ENCODE measurements at regions of chr21 and their contacts with region 1.

Region 1: GRCh38 chr21:38355992-38356797 is 99.4 kb downstream of the KCNJ15 start:
- DNase-seq: peak; percentile 70
- H3K4me3 ChIP-seq: no peak overlapping the region
- H3K27ac ChIP-seq: no peak overlapping the region
- H3K4me1 ChIP-seq: peaks cover 14% of the 10 kb centered on the region
- H3K27me3 ChIP-seq: peaks cover 0 to 2% of the 10 kb centered on the region in 2 experiments
- CTCF ChIP-seq: peak; percentile 95 to 97
- POLR2A ChIP-seq: no peak

Region 2: GRCh38 chr21:37700641-37701202 is 655.5 kb before region 1 on chr21:
- CTCF ChIA-PET with region 1: interaction called, 22 read pairs
- POLR2A ChIA-PET with region 1: no interaction called
- dilution Hi-C with region 1: no loop called
- intact Hi-C with region 1: loop called (anchors 1 kb)
- DNase-seq: peak; percentile 56
- H3K4me3 ChIP-seq: no peak overlapping the region
- H3K27ac ChIP-seq: no peak overlapping the region
- H3K4me1 ChIP-seq: no peaks in the 10 kb centered on the region
- H3K27me3 ChIP-seq: peaks cover 10 to 12% of the 10 kb centered on the region in 2 experiments
- CTCF ChIP-seq: peak; percentile 58 to 74
- POLR2A ChIP-seq: no peak

Region 3: GRCh38 chr21:38126669-38127303 is 229.4 kb before region 1 on chr21:
- CTCF ChIA-PET with region 1: interaction called, 24 read pairs
- POLR2A ChIA-PET with region 1: no interaction called
- dilution Hi-C with region 1: no loop called
- intact Hi-C with region 1: no loop called
- DNase-seq: peak; percentile 51
- H3K4me3 ChIP-seq: no peak overlapping the region
- H3K27ac ChIP-seq: no peak overlapping the region
- H3K4me1 ChIP-seq: no peaks in the 10 kb centered on the region
- H3K27me3 ChIP-seq: peaks cover 0 to 7% of the 10 kb centered on the region in 2 experiments
- CTCF ChIP-seq: peak; percentile 74 to 91
- POLR2A ChIP-seq: no peak

Region 4: GRCh38 chr21:38181096-38181495 is 175.1 kb before region 1 on chr21:
- CTCF ChIA-PET with region 1: interaction called, 740 read pairs
- POLR2A ChIA-PET with region 1: no interaction called
- dilution Hi-C with region 1: no loop called
- intact Hi-C with region 1: no loop called
- DNase-seq: no peak
- H3K4me3 ChIP-seq: no peak overlapping the region
- H3K27ac ChIP-seq: no peak overlapping the region
- H3K4me1 ChIP-seq: no peaks in the 10 kb centered on the region
- H3K27me3 ChIP-seq: no peaks in the 10 kb centered on the region
- CTCF ChIP-seq: no peak
- POLR2A ChIP-seq: no peak

Region 5: GRCh38 chr21:38219049-38219628 is 137.1 kb before region 1 on chr21:
- CTCF ChIA-PET with region 1: interaction called, 386 read pairs
- POLR2A ChIA-PET with region 1: no interaction called
- dilution Hi-C with region 1: no loop called
- intact Hi-C with region 1: loop called (anchors 1 kb)
- DNase-seq: peak; percentile 87
- H3K4me3 ChIP-seq: no peak overlapping the region
- H3K27ac ChIP-seq: no peak overlapping the region
- H3K4me1 ChIP-seq: peaks cover 7% of the 10 kb centered on the region
- H3K27me3 ChIP-seq: no peaks in the 10 kb centered on the region
- CTCF ChIP-seq: peak; percentile 87 to 91
- POLR2A ChIP-seq: no peak

Region 6: DNA sequence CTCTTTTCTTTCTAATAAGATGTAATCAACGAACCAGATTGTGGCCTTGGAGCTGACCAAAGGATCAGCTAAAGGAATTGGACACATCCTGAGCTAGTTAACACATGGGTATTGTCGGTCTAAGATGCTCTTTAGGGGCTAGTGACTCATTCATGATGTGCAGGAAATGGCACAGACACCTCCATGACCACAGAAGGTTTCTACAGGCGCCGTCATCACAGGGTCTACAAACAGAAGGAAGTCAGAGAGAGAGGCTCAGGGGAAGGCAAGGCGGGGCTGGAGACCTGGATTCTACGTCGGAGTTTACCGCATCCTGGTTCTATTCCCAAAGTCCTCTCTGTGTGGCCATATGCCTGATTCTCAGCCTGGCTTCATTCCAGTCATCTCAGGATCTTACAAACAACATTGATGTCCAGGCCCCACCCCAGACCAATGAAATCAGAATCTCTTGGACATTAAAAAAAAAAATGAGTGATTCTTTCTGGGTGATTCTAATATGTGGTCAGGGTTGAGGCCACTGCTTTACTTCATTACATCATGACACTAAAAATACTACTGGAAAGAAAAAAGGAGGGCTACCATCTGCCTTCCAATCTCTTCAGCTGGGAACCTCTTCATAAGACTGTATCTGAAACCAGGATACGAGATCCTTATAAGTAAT is 111.2 kb before region 1 on chr21:
- CTCF ChIA-PET with region 1: interaction called, 10 read pairs
- POLR2A ChIA-PET with region 1: no interaction called
- dilution Hi-C with region 1: no loop called
- intact Hi-C with region 1: loop called (anchors 1 kb)
- DNase-seq: peak; percentile 33
- H3K4me3 ChIP-seq: no peak overlapping the region
- H3K27ac ChIP-seq: peak overlapping the region; percentile 7
- H3K4me1 ChIP-seq: peaks cover 22% of the 10 kb centered on the region
- H3K27me3 ChIP-seq: peaks cover 2 to 12% of the 10 kb centered on the region in 2 experiments
- CTCF ChIP-seq: no peak
- POLR2A ChIP-seq: no peak

Region 7: GRCh38 chr21:38343693-38344092 is 12.5 kb before region 1 on chr21:
- CTCF ChIA-PET with region 1: interaction called, 26 read pairs
- POLR2A ChIA-PET with region 1: no interaction called
- dilution Hi-C with region 1: no loop called
- intact Hi-C with region 1: no loop called
- DNase-seq: peak; percentile 89
- H3K4me3 ChIP-seq: no peak overlapping the region
- H3K27ac ChIP-seq: peak overlapping the region; percentile 40
- H3K4me1 ChIP-seq: peaks cover 15% of the 10 kb centered on the region
- H3K27me3 ChIP-seq: no peaks in the 10 kb centered on the region
- CTCF ChIP-seq: no peak
- POLR2A ChIP-seq: no peak